Prostate gland (tissue), 2 donors: ENCODE measurements at regions of chr20 and their contacts with region 1.

Region 1: DNA sequence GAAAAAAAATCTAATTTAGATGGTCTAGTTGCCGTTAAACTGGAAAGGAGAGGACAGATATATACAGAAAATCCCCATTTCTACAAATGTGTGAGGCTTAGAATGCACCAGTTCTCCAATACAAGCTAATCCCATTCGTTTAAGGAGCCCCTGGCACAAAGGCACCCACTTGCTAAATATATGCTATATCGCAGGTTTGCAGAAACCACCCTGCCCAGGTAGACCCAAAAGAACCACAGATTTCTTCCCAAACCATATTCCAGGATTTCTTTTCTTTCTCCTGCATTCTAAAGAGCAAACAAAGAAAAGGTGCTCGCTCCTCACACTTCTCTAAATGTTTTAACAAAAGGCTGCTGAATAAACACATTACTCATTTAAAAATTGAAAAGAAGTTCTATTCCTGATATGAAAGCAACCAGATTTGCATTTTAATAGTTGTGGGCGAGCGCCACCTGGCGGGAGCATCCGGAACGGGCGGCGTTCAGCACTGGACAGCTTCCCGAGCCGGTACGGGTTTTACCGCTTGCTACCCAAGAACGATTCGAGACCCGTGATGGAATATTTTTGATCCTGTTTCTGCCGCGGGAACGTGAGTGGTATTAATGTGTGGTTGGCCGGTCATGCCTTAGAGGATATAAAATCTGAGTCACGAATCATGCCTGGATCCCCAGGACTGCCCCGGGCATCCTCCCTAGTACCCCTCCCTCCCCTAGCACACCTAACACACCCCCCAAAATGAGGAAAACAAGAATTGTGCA is 2.1 kb downstream of the PTPRT start:
- DNase-seq: peak; percentile 51
- H3K4me3 ChIP-seq: no peak overlapping the region
- H3K27ac ChIP-seq: no peak overlapping the region
- H3K4me1 ChIP-seq: no peaks in the 10 kb centered on the region
- H3K27me3 ChIP-seq: peaks cover 24% of the 10 kb centered on the region
- CTCF ChIP-seq: peak; percentile 81 to 97 (median 91)
- POLR2A ChIP-seq: no peak

Region 2: DNA sequence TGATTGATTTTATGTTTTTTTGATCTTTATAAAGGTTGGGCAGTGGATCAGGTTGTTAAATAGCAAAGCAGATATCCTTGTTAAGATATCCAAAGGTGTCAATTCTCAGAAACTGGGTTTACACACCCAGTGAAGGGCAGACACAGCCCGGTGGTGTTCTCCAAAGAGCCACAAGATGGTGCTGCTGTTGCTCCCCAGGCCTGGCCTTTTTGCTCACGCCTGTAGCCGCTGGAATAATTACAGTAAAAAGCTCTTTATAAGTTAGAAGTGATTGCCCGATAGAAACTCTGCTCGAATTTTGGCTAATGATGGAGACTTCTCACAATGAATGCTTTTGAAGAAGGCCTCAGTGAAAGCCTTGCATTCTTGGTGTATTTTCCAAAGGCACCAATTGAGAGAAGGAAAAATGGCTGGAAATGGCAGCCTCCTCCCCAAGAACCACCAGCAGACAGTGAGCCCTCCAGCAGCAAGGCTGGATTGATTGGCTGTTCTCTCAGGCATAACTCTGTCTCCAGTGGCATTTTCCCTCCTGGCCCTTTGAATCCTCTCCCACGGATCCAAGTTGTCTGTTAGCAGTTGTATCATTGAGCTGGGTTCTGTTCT is 1449.0 kb before region 1 on chr20:
- intact Hi-C with region 1: loop called (anchors 5 kb)
- DNase-seq: peak; percentile 20
- H3K4me3 ChIP-seq: no peak overlapping the region
- H3K27ac ChIP-seq: no peak overlapping the region
- H3K4me1 ChIP-seq: no peaks in the 10 kb centered on the region
- H3K27me3 ChIP-seq: no peaks in the 10 kb centered on the region
- CTCF ChIP-seq: peak; percentile 37 to 67 (median 59)
- POLR2A ChIP-seq: no peak

Region 3: GRCh38 chr20:42204203-42204942 is 983.3 kb before region 1 on chr20:
- intact Hi-C with region 1: loop called (anchors 5 kb)
- DNase-seq: peak; percentile 7
- H3K4me3 ChIP-seq: no peak overlapping the region
- H3K27ac ChIP-seq: no peak overlapping the region
- H3K4me1 ChIP-seq: no peaks in the 10 kb centered on the region
- H3K27me3 ChIP-seq: no peaks in the 10 kb centered on the region
- CTCF ChIP-seq: peak in 3 of 4 experiments; percentile 30 to 44 (median 39)
- POLR2A ChIP-seq: no peak